CD8-positive, alpha-beta memory T cell (primary cell): ENCODE measurements at regions of chr11 and their contacts with region 1.

Region 1: GRCh38 chr11:18304745-18305144 is 17.2 kb downstream of the HPS5 start:
- DNase-seq: no peak
- H3K4me3 ChIP-seq: no peak overlapping the region
- H3K4me3 Mint-ChIP-seq: no peak overlapping the region
- H3K27ac ChIP-seq: no peak overlapping the region
- H3K27ac Mint-ChIP-seq: no peak overlapping the region
- H3K4me1 ChIP-seq: no peaks in the 10 kb centered on the region
- H3K4me1 Mint-ChIP-seq: no peaks in the 10 kb centered on the region
- H3K27me3 ChIP-seq: no peaks in the 10 kb centered on the region
- H3K27me3 Mint-ChIP-seq: no peaks in the 10 kb centered on the region

Region 2: GRCh38 chr11:18347471-18348125 is 42.9 kb after region 1 on chr11:
- CTCF ChIA-PET with region 1: no interaction called
- POLR2A ChIA-PET with region 1: interaction called, 10 read pairs
- DNase-seq: no peak
- H3K4me3 ChIP-seq: no peak overlapping the region
- H3K4me3 Mint-ChIP-seq: no peak overlapping the region
- H3K27ac ChIP-seq: no peak overlapping the region
- H3K27ac Mint-ChIP-seq: peak overlapping the region in 2 of 8 donors; percentile 73 to 76
- H3K4me1 ChIP-seq: no peaks in the 10 kb centered on the region
- H3K4me1 Mint-ChIP-seq: peaks cover 0 to 3% (median 3%) of the 10 kb centered on the region in 3 donors
- H3K27me3 ChIP-seq: no peaks in the 10 kb centered on the region
- H3K27me3 Mint-ChIP-seq: no peaks in the 10 kb centered on the region